Caco-2 (cell line): ENCODE measurements at regions of chrX and their contacts with region 1.

Region 1: GRCh38 chrX:5113128-5113527 is 1115.5 kb downstream of the NLGN4X start:
- DNase-seq: peak in 1 of 2 experiments; percentile 0
- H3K4me3 ChIP-seq: no peak overlapping the region
- H3K4me3 Mint-ChIP-seq: no peak overlapping the region
- H3K27ac Mint-ChIP-seq: no peak overlapping the region
- H3K4me1 ChIP-seq: no peaks in the 10 kb centered on the region
- H3K4me1 Mint-ChIP-seq: no peaks in the 10 kb centered on the region
- H3K27me3 ChIP-seq: no peaks in the 10 kb centered on the region
- H3K27me3 Mint-ChIP-seq: no peaks in the 10 kb centered on the region
- CTCF ChIP-seq: peak; percentile 23 to 34

Region 2: DNA sequence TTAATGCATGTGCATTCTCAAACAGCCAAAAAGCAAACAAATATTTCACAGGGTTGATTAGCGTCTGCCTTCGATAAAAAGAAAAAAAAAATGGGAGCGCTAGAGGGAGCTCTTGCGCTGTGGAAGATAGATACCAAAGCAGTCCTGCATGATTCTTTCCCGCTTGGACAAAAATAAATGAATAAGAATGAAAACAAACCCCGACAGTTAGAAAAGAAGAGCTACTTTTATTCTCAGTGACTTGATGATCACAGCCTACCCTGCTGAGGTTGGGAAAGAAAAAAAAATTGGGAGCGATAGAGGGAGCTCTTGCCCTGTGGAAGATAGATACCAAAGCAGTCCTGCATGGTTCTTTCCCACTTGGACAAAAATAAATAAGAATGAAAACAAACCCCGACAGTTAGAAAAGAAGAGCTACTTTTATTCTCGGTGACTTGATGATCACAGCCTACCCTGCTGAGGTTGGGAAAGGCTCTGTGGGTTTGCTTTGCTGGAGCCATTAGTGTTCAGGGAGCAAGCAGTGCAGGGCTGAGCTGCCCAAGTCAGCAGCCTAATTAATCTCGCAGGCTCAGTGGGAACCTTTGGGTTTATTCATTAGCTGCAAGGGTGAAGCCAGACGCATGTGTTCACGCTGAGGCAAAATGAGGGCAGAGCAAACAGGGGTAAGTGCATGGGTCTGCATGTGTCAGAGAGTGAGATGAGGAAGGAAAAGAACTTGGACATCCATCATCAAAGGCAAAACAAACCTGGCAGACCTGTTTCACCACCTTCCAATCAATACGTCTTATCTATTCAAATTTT is 1150.4 kb before region 1 on chrX:
- CTCF ChIA-PET with region 1: no interaction called
- POLR2A ChIA-PET with region 1: no interaction called
- intact Hi-C with region 1: loop called (anchors 5 kb)
- DNase-seq: peak in 1 of 2 experiments; percentile 36
- H3K4me3 ChIP-seq: no peak overlapping the region
- H3K4me3 Mint-ChIP-seq: peak overlapping the region; percentile 46
- H3K27ac Mint-ChIP-seq: no peak overlapping the region
- H3K4me1 ChIP-seq: no peaks in the 10 kb centered on the region
- H3K4me1 Mint-ChIP-seq: peaks cover 7% of the 10 kb centered on the region
- H3K27me3 ChIP-seq: no peaks in the 10 kb centered on the region
- H3K27me3 Mint-ChIP-seq: no peaks in the 10 kb centered on the region
- CTCF ChIP-seq: peak; percentile 40 to 52

Region 3: GRCh38 chrX:4268676-4269075 is 844.5 kb before region 1 on chrX:
- CTCF ChIA-PET with region 1: no interaction called
- POLR2A ChIA-PET with region 1: no interaction called
- intact Hi-C with region 1: loop called (anchors 5 kb)
- DNase-seq: peak in 1 of 2 experiments; percentile 5
- H3K4me3 ChIP-seq: no peak overlapping the region
- H3K4me3 Mint-ChIP-seq: no peak overlapping the region
- H3K27ac Mint-ChIP-seq: no peak overlapping the region
- H3K4me1 ChIP-seq: no peaks in the 10 kb centered on the region
- H3K4me1 Mint-ChIP-seq: no peaks in the 10 kb centered on the region
- H3K27me3 ChIP-seq: no peaks in the 10 kb centered on the region
- H3K27me3 Mint-ChIP-seq: no peaks in the 10 kb centered on the region
- CTCF ChIP-seq: no peak

Region 4: GRCh38 chrX:5080791-5081190 is 32.3 kb before region 1 on chrX:
- CTCF ChIA-PET with region 1: no interaction called
- POLR2A ChIA-PET with region 1: no interaction called
- intact Hi-C with region 1: no loop called
- DNase-seq: no peak
- H3K4me3 ChIP-seq: no peak overlapping the region
- H3K4me3 Mint-ChIP-seq: no peak overlapping the region
- H3K27ac Mint-ChIP-seq: no peak overlapping the region
- H3K4me1 ChIP-seq: no peaks in the 10 kb centered on the region
- H3K4me1 Mint-ChIP-seq: no peaks in the 10 kb centered on the region
- H3K27me3 ChIP-seq: no peaks in the 10 kb centered on the region
- H3K27me3 Mint-ChIP-seq: no peaks in the 10 kb centered on the region
- CTCF ChIP-seq: no peak